Psoas muscle (tissue), 8 donors: ENCODE measurements at regions of chr20 and their contacts with region 1.

Region 1: DNA sequence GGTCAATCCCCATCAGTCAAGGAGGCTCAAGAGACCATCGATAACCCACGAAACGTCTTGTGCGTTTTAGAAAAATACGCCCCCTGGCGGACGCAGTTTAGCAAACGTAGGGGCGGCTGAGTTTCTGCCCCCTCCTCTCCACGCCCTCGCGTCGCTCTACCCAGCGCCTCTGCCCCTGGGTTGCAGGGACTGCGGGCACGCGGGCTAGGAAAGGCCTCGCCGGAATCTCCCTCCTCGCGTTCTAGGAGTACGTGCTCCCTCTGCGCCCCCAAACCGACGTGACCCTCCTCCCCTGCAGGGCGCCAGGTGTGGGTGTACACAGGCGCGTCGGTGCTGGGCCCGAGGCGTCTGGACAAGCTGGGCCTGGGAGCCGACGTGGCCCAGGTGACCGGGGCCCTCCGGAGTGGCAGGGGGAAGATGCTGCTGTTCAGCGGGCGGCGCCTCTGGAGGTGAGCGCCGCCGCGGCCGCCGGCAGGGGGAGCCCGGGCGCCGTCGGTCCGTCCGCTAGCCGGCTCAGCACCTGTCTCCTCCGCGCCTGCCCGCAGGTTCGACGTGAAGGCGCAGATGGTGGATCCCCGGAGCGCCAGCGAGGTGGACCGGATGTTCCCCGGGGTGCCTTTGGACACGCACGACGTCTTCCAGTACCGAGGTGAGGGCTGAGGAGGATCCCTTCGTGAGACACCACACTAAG is 5.3 kb downstream of the MMP9 start:
- DNase-seq: peak in 1 of 2 donors; percentile 46
- ATAC-seq: peak; percentile 77 to 87 (median 78)
- H3K4me3 ChIP-seq: no peak overlapping the region
- H3K27ac ChIP-seq: no peak overlapping the region
- H3K4me1 ChIP-seq: peaks cover 6% of the 10 kb centered on the region
- H3K27me3 ChIP-seq: peaks cover 0 to 95% (median 31%) of the 10 kb centered on the region in 3 donors
- CTCF ChIP-seq: peak; percentile 65

Region 2: DNA sequence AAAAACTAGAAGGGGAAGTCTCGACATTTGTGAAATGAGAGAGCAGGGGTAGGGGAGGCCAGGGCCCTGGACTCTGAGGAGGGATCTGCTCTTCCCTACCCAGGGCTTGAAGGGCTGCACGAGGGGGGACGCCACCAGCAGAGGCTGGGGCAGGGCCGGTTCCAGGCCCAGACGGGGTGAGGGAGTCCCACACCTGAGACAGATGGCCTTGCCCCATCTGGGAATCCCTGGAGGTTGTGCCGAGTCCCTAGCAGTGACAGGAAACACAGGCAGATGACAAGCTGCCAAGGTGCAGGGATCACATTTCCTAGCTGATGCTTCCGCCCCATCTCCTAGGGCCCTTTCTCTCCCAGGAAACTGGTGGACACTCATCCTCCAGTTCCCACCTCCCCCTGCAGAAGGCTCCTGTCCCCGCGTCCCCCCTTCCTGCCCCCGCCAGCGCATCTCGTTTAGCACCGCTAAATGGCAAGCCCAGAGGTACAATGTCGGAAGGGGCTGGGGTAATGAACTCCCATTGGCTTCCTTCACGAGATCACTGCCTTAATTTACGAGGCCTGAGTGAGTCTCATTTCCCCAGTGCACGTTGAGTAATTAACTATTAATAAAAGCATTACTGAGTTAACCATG is 329.5 kb after region 1 on chr20:
- intact Hi-C with region 1: loop called in 1 of 2 experiments (anchors 5 kb)
- DNase-seq: no peak
- ATAC-seq: peak; percentile 59 to 81 (median 79)
- H3K4me3 ChIP-seq: peak overlapping the region; percentile 48
- H3K27ac ChIP-seq: peak overlapping the region; percentile 84
- H3K4me1 ChIP-seq: peaks cover 9% of the 10 kb centered on the region
- H3K27me3 ChIP-seq: peaks cover 0 to 33% (median 0%) of the 10 kb centered on the region in 3 donors
- CTCF ChIP-seq: no peak